ENCODE measurements at regions of chr4 and their contacts with region 1.

Region 1: DNA sequence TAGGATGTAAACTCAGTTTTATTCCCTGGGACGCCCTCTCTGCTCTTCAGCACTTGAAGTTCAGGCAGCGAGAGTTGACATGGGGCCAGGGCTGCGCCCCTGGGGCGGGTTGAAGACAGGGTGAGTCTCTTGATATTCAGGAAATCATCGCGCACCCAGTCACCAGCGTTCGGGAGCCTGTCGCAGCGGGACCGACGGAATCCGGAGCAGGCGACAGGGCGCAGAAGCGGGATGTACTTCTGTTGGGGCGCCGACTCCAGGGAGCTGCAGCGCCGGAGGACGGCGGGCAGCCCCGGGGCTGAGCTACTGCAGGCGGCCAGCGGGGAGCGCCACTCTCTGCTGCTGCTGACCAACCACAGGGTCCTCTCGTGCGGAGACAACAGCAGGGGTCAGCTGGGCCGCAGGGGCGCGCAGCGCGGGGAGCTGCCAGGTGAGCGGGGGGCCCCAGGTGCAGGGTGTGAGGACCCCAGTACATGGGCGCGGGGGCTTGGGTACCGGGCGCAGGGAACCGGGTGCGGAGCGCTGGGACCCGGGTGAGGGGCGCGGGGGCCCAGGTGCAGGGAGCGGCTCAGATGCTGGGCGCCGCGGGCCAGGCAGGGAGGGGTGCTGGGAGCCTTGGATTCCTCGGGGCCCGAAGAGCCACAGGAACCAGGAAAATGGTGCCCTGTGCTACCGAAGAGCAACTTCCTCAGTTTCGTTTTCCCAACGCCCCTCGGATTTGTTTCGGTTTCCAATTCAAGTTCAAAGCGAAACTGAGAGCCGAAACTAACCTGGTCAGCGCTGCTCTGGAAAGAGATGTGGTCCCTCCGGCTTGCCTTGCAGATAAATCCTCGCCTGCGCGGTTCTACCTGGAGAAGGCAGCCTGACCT is at the start of gene HERC6:
- DNase-seq: peak; percentile 71
- H3K4me3 ChIP-seq: peak within 1 kb of the TSS; percentile 98
- H3K27ac ChIP-seq: peak within 1 kb of the TSS; percentile 98
- H3K4me1 ChIP-seq: peaks cover 10% of the 10 kb centered on the region
- H3K27me3 ChIP-seq: no peaks in the 10 kb centered on the region
- CTCF ChIP-seq: peak; percentile 88
- total RNA-seq, gene HERC6: 9.3 TPM

Region 2: DNA sequence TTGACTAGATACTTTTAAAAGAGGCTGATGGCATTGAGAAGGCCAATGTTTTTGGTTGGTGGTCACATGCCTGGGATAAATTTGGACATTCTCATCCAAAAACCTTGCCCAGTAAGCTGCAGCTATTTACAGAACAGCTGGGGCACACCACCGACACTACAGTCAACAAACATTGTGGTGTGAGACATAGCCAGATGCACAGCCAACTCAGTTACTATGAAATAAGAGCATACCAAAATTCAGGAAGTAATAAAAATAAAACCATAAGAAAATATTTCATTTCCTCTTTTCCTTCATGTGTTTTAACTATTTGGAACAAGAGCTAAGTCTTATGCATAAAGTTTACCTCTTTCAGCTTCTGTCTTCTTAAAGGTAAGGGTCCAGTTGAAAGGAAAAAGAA is 103.4 kb before region 1 on chr4:
- intact Hi-C with region 1: loop called (anchors 10 kb)
- DNase-seq: no peak
- H3K4me3 ChIP-seq: no peak overlapping the region
- H3K27ac ChIP-seq: peak overlapping the region; percentile 51
- H3K4me1 ChIP-seq: peaks cover 81% of the 10 kb centered on the region
- H3K27me3 ChIP-seq: no peaks in the 10 kb centered on the region
- CTCF ChIP-seq: no peak

Region 3: DNA sequence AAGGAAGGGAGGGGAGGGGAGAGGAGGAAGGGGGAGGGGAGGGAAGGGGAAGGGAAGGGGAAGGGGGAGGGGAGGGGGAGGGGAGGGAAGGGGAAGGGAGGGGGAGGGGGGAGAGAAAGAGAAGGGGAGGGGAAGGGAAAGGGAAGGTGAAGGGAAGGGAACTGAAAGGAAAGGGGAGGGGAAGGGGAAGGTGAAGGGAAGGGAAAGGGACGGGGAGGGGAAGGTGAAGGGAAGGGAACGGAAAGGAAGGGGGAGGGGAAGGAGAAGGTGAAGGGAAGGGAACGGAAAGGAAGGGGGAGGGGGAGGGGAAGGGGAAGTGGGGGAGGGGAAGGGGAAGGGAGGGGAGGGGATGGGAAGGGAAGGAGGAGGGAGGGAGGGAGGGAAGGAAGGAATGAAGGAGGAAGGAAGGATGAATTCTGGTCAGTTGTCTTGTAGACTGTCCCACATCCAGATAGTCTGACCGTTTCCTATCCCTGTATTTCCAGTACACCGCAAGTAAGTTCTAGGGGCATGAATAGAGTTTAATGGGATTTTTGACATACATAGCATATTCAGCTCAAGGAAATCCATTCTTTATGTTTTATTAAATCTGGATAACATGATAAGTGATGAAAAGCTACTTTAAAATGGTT is 98.4 kb after region 1 on chr4:
- intact Hi-C with region 1: no loop called
- DNase-seq: no peak
- H3K4me3 ChIP-seq: no peak overlapping the region
- H3K27ac ChIP-seq: no peak overlapping the region
- H3K4me1 ChIP-seq: peaks cover 11% of the 10 kb centered on the region
- H3K27me3 ChIP-seq: no peaks in the 10 kb centered on the region
- CTCF ChIP-seq: no peak